CD8-positive, alpha-beta T cell (primary cell): ENCODE measurements at regions of chr12 and their contacts with region 1.

Region 1: GRCh38 chr12:132003846-132004245 is 54.1 kb downstream of the EP400 start:
- DNase-seq: no peak
- ATAC-seq: no peak
- H3K4me3 ChIP-seq: no peak overlapping the region
- H3K4me3 Mint-ChIP-seq: no peak overlapping the region
- H3K27ac ChIP-seq: no peak overlapping the region
- H3K27ac Mint-ChIP-seq: no peak overlapping the region
- H3K4me1 ChIP-seq: no peaks in the 10 kb centered on the region
- H3K4me1 Mint-ChIP-seq: no peaks in the 10 kb centered on the region
- H3K27me3 ChIP-seq: no peaks in the 10 kb centered on the region
- H3K27me3 Mint-ChIP-seq: no peaks in the 10 kb centered on the region
- CTCF ChIP-seq: no peak

Region 2: DNA sequence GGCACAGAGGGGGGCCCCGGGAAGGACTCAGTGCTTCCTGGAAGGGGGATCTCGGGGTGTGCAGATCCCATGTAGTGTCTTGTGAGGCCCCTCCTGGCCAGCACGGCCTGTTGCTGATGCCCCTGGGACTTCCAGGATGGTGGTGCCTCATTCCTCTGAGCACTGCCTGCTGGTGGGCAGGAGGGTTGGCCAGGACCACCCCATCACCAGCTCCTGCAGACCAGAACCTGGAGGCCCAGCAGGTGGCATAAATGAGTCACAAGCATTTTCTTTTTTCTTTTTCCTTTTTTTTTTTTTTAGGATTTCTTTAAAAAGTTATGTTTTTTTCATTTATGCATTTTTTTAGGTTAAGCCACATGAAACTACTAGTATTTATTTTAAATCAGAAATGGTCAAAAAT is 167.7 kb before region 1 on chr12:
- CTCF ChIA-PET with region 1: no interaction called
- POLR2A ChIA-PET with region 1: no interaction called
- intact Hi-C with region 1: loop called in 1 of 2 experiments (anchors 5 kb)
- DNase-seq: peak in 1 of 9 experiments; percentile 24
- ATAC-seq: no peak
- H3K4me3 ChIP-seq: no peak overlapping the region
- H3K4me3 Mint-ChIP-seq: no peak overlapping the region
- H3K27ac ChIP-seq: no peak overlapping the region
- H3K27ac Mint-ChIP-seq: no peak overlapping the region
- H3K4me1 ChIP-seq: peaks cover under 1% of the 10 kb centered on the region
- H3K4me1 Mint-ChIP-seq: no peaks in the 10 kb centered on the region
- H3K27me3 ChIP-seq: no peaks in the 10 kb centered on the region
- H3K27me3 Mint-ChIP-seq: peaks cover 10% of the 10 kb centered on the region
- CTCF ChIP-seq: no peak